ENCODE measurements at regions of chr3 and their contacts with region 1.

Region 1: GRCh38 chr3:172595641-172596393 is 72.6 kb upstream of the TNFSF10 start:
- DNase-seq: peak; percentile 58
- H3K4me3 Mint-ChIP-seq: peak overlapping the region; percentile 77
- H3K27ac Mint-ChIP-seq: peak overlapping the region; percentile 91
- H3K4me1 Mint-ChIP-seq: peaks cover 55% of the 10 kb centered on the region
- H3K27me3 Mint-ChIP-seq: no peaks in the 10 kb centered on the region

Region 2: GRCh38 chr3:171620825-171621434 is 974.9 kb before region 1 on chr3:
- CTCF ChIA-PET with region 1: no interaction called
- intact Hi-C with region 1: no loop called
- DNase-seq: no peak
- H3K4me3 Mint-ChIP-seq: no peak overlapping the region
- H3K27ac Mint-ChIP-seq: no peak overlapping the region
- H3K4me1 Mint-ChIP-seq: no peaks in the 10 kb centered on the region
- H3K27me3 Mint-ChIP-seq: peaks cover 2% of the 10 kb centered on the region

Region 3: GRCh38 chr3:171846597-171846996 is 749.2 kb before region 1 on chr3:
- CTCF ChIA-PET with region 1: no interaction called
- intact Hi-C with region 1: loop called (anchors 1 kb)
- DNase-seq: peak; percentile 32
- H3K4me3 Mint-ChIP-seq: no peak overlapping the region
- H3K27ac Mint-ChIP-seq: no peak overlapping the region
- H3K4me1 Mint-ChIP-seq: peaks cover 18% of the 10 kb centered on the region
- H3K27me3 Mint-ChIP-seq: peaks cover 1% of the 10 kb centered on the region

Region 4: DNA sequence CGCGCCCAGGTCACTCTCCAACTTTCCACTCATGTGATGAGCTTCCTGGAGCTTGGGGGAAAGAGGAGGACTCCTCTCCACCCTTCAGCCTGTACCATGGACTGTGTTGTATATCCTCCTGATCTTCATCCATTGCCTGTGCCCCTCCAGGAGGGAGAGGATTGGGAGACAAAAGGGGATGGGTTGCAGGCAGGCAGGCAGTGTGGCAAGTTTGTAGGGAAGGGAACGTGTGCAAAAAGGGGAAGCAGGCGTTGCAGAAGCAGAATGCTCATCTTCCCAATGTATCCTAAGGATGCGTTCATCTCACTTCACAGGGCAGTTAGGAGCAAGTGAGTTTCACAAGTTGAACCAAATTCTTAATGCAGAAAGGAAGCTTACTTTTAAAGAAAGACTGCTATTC is 119.5 kb before region 1 on chr3:
- CTCF ChIA-PET with region 1: interaction called, 27 read pairs
- intact Hi-C with region 1: loop called (anchors 1 kb)
- DNase-seq: no peak
- H3K4me3 Mint-ChIP-seq: no peak overlapping the region
- H3K27ac Mint-ChIP-seq: no peak overlapping the region
- H3K4me1 Mint-ChIP-seq: peaks cover 14% of the 10 kb centered on the region
- H3K27me3 Mint-ChIP-seq: no peaks in the 10 kb centered on the region

Region 5: DNA sequence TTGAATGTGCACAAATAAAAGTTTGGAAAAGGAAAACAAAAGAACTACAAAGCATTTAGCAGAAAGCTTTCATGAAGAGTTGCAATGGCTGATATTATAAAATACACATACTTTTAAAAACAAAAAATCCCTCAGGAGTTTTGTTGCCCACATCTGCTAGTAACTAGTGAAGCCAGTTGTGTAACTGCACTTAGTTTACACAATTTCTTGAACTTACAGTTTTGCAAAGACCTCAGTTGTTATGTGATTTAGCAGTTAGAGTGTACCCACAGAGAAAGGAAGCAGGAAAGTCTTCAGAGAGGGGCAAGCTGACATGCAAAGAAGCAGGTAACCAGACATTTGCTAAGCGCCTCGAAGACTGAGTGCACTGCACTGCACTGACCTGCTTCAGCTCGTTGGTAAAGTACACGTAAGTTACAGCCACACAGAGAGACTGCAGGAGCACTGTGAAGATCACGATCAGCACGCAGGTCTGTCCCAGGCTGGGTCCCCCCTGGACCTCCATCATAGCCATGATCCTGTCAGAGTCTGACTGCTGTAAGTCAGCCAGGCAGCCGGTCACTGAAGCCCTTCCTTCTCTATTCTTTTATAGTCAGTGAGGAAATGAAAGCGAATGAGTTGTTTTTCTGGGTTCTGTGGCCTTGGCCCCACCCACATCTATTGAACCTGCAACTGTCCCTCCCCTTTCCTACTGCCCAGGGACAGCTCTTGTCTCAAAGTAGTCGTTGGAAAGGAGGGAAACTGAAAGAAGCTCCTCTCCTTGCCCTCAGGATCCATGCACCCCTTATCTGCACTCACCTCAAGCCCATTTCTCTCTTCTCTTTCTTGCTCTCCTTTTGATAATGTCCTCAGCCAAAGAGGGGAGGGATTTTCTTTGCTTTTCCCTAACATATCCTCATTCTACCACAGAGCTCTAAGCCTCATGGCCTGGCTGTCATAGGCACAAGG is 72.7 kb before region 1 on chr3 and contains the start of gene TNFSF10:
- CTCF ChIA-PET with region 1: interaction called, 122 read pairs
- intact Hi-C with region 1: loop called (anchors 1 kb)
- DNase-seq: peak; percentile 78
- H3K4me3 Mint-ChIP-seq: peak within 1 kb of the TSS; percentile 96
- H3K27ac Mint-ChIP-seq: peak within 1 kb of the TSS; percentile 96
- H3K4me1 Mint-ChIP-seq: peaks cover 42% of the 10 kb centered on the region
- H3K27me3 Mint-ChIP-seq: no peaks in the 10 kb centered on the region
- total RNA-seq, gene TNFSF10: 31.8 to 32.7 TPM

Region 6: DNA sequence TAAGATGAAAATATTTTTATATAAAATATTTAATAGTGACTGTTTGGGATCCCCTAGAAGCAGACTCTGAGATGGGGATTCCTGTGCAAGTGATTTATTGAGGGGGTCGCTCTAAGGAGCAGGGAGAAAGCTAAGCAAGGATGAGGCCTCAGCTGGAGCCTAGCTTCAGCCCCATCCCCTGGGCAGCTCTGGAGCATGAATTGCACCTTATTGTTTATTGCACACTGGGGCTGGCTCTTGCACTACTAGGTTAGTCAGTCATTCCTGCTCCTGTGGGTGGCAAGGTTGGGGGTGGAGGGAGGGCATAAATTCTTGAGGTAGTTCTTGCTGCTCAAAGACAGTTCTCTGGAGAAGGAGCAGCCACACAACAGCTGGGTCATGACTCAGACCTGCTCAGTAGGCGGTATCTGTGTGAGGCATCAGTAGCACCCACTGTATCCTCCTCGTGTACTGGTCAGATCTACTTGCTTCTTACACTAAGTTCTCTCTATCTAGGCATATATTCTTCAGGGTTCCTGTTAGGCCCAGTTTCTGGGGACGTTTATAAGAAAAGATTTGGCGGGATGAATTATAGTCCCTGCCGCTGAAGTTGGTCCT is 45.4 kb before region 1 on chr3:
- CTCF ChIA-PET with region 1: interaction called, 6 read pairs
- intact Hi-C with region 1: loop called (anchors 1 kb)
- DNase-seq: peak; percentile 91
- H3K4me3 Mint-ChIP-seq: no peak overlapping the region
- H3K27ac Mint-ChIP-seq: peak overlapping the region; percentile 42
- H3K4me1 Mint-ChIP-seq: peaks cover 46% of the 10 kb centered on the region
- H3K27me3 Mint-ChIP-seq: no peaks in the 10 kb centered on the region

Region 7: DNA sequence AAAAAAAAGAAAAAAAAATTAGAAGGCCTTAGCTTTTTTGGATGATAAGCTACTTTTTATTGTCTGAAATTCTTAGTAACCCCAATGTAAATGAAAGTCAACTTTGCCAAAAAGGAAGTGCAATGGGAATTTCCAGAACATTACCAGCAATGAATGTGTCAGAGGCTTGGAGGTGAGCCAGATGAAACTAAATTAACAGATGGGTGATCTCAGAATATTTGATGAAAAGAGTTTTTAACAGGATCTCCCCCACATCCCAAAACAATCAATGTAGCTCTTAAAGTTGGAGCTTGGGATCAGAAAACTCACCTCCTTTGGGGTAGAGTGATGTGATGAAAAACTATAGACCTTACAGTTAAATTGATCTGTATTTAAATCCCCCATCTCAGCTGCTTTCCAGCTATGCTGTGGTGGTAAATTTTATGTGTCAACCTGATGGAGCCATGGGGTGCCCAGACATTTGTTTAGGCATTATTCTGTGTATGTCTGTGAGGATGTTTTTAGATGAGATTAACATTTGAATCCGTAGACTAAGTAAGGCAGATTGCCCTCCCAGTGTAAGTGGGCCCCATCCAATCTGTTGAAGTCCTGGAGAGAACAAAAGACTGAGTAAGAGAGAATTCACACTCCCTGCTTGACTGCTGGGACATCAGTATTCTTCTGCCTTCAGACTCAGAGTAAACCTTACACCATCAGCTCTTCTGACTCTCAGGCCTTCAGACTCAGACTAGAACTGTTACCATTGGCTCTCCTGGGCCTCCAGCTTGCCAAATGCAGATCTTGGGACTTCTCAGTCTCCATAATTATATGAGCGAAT is 11.7 kb after region 1 on chr3:
- CTCF ChIA-PET with region 1: interaction called, 30 read pairs
- intact Hi-C with region 1: no loop called
- DNase-seq: peak; percentile 51
- H3K4me3 Mint-ChIP-seq: no peak overlapping the region
- H3K27ac Mint-ChIP-seq: peak overlapping the region; percentile 61
- H3K4me1 Mint-ChIP-seq: peaks cover 11% of the 10 kb centered on the region
- H3K27me3 Mint-ChIP-seq: no peaks in the 10 kb centered on the region

Region 8: GRCh38 chr3:172666873-172667694 is 71.3 kb after region 1 on chr3:
- CTCF ChIA-PET with region 1: interaction called, 3 read pairs
- intact Hi-C with region 1: loop called (anchors 1 kb)
- DNase-seq: peak; percentile 92
- H3K4me3 Mint-ChIP-seq: no peak overlapping the region
- H3K27ac Mint-ChIP-seq: no peak overlapping the region
- H3K4me1 Mint-ChIP-seq: peaks cover 11% of the 10 kb centered on the region
- H3K27me3 Mint-ChIP-seq: no peaks in the 10 kb centered on the region

Region 9: GRCh38 chr3:172787746-172788145 is 191.9 kb after region 1 on chr3:
- CTCF ChIA-PET with region 1: no interaction called
- intact Hi-C with region 1: no loop called
- DNase-seq: no peak
- H3K4me3 Mint-ChIP-seq: no peak overlapping the region
- H3K27ac Mint-ChIP-seq: no peak overlapping the region
- H3K4me1 Mint-ChIP-seq: no peaks in the 10 kb centered on the region
- H3K27me3 Mint-ChIP-seq: no peaks in the 10 kb centered on the region